PC-9 (cell line): ENCODE measurements at regions of chr11 and their contacts with region 1.

Region 1: GRCh38 chr11:107928046-107928766 is at the start of gene RAB39A:
- DNase-seq: peak; percentile 62 to 64
- H3K4me3 ChIP-seq: no peak within 1 kb of the TSS
- H3K27ac ChIP-seq: no peak within 1 kb of the TSS
- H3K4me1 ChIP-seq: peaks cover 15% of the 10 kb centered on the region
- H3K27me3 ChIP-seq: peaks cover 20% of the 10 kb centered on the region
- CTCF ChIP-seq: no peak
- total RNA-seq, gene RAB39A: not detected in 2 replicates

Region 2: GRCh38 chr11:107858217-107859070 is 69.8 kb before region 1 on chr11 and contains the start of gene SLC35F2:
- CTCF ChIA-PET with region 1: no interaction called
- POLR2A ChIA-PET with region 1: no interaction called
- intact Hi-C with region 1: no loop called
- DNase-seq: peak; percentile 81 to 91
- H3K4me3 ChIP-seq: peak within 1 kb of the TSS; percentile 93
- H3K27ac ChIP-seq: peak within 1 kb of the TSS; percentile 78
- H3K4me1 ChIP-seq: peaks cover 31% of the 10 kb centered on the region
- H3K27me3 ChIP-seq: no peaks in the 10 kb centered on the region
- CTCF ChIP-seq: 0 out of 2 replicates have a peak, but pooled peaks have one; percentile 13
- total RNA-seq, gene SLC35F2: 24.9 and 35.7 TPM in 2 replicates

Region 3: GRCh38 chr11:108048269-108048668 is 120.1 kb after region 1 on chr11:
- CTCF ChIA-PET with region 1: no interaction called
- POLR2A ChIA-PET with region 1: interaction called, 10 read pairs
- intact Hi-C with region 1: no loop called
- DNase-seq: no peak
- H3K4me3 ChIP-seq: no peak overlapping the region
- H3K27ac ChIP-seq: no peak overlapping the region
- H3K4me1 ChIP-seq: no peaks in the 10 kb centered on the region
- H3K27me3 ChIP-seq: no peaks in the 10 kb centered on the region
- CTCF ChIP-seq: no peak